PC-3 (cell line): ENCODE measurements at regions of chr7 and their contacts with region 1.

Region 1: GRCh38 chr7:66654123-66654732 is 25.5 kb downstream of the KCTD7 start:
- DNase-seq: peak; percentile 96
- ATAC-seq: peak; percentile 90
- H3K4me3 ChIP-seq: peak overlapping the region; percentile 73
- H3K27ac ChIP-seq: peak overlapping the region; percentile 88
- H3K4me1 ChIP-seq: 0 out of 2 replicates have a peak, but pooled peaks cover 5% of the 10 kb centered on the region
- H3K27me3 ChIP-seq: no peaks in the 10 kb centered on the region
- CTCF ChIP-seq: no peak

Region 2: DNA sequence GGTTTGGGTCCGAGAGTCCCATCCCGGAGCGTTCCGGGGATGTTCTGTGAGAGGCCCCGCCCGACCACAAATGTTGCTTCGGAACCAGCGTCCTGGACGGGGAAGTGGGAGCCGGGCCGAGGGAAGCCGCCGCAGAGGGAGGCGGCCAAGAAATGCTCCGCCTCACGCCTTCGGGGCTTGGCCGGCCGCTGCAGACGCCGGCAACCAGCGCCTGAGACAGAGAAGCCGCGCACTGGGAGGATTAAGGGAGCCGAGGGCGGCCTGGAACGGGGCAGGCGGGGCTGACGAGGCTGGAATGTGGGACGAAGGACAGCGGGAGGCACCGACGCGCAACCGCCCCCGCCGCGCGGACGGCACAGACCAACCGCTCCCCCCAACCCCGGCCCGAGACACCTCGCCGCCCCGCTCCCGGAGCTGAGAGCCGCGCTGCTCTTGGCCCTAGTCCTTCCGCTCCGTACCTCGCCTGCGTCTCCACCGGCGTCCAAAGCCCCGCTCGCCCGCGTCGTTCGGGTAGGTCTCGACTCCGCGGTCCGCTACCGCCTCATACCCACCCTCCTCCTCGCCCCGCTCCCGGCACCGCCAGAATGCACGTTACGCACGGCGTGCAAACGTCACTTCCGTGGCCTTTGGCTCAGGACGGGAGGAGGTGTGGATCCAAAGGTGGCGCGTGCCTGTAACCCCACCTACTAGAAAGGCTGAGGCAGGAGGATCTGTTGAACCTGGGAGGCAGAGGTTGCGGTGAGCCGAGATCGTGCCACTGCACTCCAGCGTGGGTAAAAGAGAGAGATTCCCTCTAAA is 62.2 kb before region 1 on chr7:
- CTCF ChIA-PET with region 1: no interaction called
- POLR2A ChIA-PET with region 1: no interaction called
- intact Hi-C with region 1: loop called (anchors 10 kb)
- DNase-seq: peak; percentile 95
- ATAC-seq: peak; percentile 85
- H3K4me3 ChIP-seq: peak overlapping the region; percentile 99
- H3K27ac ChIP-seq: peak overlapping the region; percentile 65
- H3K4me1 ChIP-seq: peaks cover 32% of the 10 kb centered on the region
- H3K27me3 ChIP-seq: no peaks in the 10 kb centered on the region
- CTCF ChIP-seq: no peak

Region 3: DNA sequence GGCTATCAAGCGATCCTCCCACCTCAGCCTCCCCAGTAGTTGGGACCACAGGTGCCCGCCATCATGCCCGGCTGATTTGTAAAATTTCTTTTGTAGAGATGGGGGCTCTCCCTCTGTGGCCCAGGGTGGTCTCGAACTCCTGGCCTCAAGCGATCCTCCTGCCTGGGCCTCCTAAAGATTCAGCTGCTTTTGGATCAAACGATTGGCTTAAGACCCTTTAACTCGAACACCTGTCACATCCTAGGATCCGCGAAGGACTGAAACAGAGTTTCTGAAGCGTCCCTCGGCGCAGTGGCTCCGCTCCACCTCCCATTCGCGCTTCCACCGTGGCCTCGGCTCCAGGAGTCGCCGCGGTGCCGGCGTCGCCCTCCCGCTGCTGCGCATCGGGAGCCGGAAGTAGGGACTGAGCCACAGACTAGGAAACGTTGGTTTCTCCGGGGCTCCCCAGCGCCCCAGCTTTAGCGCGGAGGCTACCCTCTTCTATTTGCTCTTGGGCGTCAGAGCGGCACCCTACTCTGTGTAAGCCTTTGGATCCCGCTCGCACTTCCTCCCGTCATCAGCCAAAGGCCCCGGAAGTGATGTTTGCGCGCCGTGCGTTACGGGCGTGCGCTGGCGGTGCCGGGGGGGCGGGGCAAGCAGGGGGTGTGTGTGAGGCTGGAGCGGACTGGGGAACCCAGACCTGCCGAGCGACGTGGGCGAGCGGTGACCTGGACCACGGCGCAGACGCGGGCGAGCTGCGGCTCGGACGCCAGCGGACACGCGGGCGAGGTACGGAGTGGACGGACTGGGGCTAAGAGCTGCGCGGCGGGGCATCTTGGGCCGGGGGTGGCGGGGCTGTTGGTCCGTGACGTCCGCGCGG is 27.5 kb after region 1 on chr7:
- CTCF ChIA-PET with region 1: no interaction called
- POLR2A ChIA-PET with region 1: interaction called, 3 read pairs
- intact Hi-C with region 1: loop called (anchors 2 kb)
- DNase-seq: peak; percentile 96
- ATAC-seq: peak; percentile 88
- H3K4me3 ChIP-seq: peak overlapping the region; percentile 94
- H3K27ac ChIP-seq: peak overlapping the region; percentile 61
- H3K4me1 ChIP-seq: peaks cover 21% of the 10 kb centered on the region
- H3K27me3 ChIP-seq: no peaks in the 10 kb centered on the region
- CTCF ChIP-seq: no peak